GM12878 (cell line): ENCODE measurements at regions of chr6 and their contacts with region 1.

Region 1: DNA sequence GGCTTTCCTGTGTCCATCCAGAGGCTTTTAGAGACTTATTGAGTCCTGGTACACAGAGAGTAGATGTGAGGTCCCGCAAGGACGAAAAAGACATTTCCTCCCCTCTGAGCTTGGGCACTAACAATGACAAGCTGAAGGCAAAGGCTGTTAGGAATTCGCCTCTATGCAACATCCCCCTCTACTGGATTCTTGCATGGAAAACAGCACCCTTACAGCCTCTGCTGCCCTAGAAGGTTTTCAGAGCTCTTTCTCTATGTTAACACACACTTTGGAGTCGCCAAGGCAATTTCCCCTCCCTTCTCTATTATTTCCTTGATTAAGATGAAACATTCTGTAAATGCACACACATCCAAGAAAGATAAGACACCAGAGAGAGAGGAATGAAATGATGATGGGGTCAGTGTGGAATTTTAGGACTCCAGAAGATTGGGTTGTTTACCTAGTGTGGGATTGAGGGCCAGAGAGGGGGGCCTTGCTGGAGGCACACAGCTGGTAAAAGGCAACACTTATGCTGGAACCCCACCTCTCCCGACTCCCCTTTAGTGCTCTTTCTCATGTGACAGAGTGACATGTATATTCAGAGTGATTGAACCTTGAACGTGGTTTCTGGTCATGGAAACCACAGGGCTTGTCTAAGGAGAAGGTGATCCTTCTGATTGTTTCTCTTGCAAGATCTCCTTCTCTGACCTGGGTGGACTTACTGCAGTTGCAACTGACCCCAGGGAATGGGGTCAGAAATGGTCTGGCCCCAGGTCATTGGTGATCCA is 300.7 kb downstream of the CLIC5 start:
- DNase-seq: peak; percentile 48
- ATAC-seq: peak; percentile 54
- H3K4me3 ChIP-seq: no peak overlapping the region
- H3K27ac ChIP-seq: no peak overlapping the region
- H3K4me1 ChIP-seq: peaks cover 16% of the 10 kb centered on the region
- H3K27me3 ChIP-seq: no peaks in the 10 kb centered on the region
- CTCF ChIP-seq: peak; percentile 61 to 89 (median 75)
- EP300 ChIP-seq: no peak
- POLR2A ChIP-seq: no peak
- RAD21 ChIP-seq: peak; percentile 93

Region 2: DNA sequence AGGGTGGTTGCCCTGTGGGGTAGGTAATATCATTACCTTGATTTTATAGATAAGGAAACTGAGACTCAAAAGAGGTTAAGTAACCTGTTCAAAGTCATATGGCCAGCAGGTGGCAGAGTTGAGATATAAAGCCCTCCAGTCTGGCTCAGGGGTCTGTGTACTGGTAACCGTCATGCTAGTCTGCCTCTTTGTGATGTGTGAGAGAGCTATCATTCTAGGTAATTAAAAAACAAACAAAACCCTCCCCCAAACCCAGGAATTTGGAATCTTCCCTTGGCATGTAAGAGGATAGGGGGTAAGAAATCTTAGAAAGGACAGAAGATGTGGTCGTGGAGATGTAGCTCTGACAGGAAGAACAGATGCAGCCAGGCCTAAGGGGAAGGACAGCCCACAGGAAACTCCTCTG is 1121.4 kb before region 1 on chr6:
- CTCF ChIA-PET with region 1: interaction called, 15 read pairs
- POLR2A ChIA-PET with region 1: no interaction called
- RAD21 ChIA-PET with region 1: interaction called, 4 read pairs
- SMC1A ChIA-PET with region 1: interaction called, 6 read pairs
- in situ Hi-C with region 1: no loop called
- intact Hi-C with region 1: loop called (anchors 10 kb)
- DNase-seq: peak; percentile 7
- ATAC-seq: peak; percentile 93
- H3K4me3 ChIP-seq: no peak overlapping the region
- H3K27ac ChIP-seq: no peak overlapping the region
- H3K4me1 ChIP-seq: no peaks in the 10 kb centered on the region
- H3K27me3 ChIP-seq: peaks cover 0 to 2% of the 10 kb centered on the region in 2 experiments; a peak in 1 of 4 replicates
- CTCF ChIP-seq: peak; percentile 55 to 60 (median 56); a peak in 5 of 6 replicates
- EP300 ChIP-seq: no peak
- POLR2A ChIP-seq: no peak
- RAD21 ChIP-seq: peak; percentile 63

Region 3: DNA sequence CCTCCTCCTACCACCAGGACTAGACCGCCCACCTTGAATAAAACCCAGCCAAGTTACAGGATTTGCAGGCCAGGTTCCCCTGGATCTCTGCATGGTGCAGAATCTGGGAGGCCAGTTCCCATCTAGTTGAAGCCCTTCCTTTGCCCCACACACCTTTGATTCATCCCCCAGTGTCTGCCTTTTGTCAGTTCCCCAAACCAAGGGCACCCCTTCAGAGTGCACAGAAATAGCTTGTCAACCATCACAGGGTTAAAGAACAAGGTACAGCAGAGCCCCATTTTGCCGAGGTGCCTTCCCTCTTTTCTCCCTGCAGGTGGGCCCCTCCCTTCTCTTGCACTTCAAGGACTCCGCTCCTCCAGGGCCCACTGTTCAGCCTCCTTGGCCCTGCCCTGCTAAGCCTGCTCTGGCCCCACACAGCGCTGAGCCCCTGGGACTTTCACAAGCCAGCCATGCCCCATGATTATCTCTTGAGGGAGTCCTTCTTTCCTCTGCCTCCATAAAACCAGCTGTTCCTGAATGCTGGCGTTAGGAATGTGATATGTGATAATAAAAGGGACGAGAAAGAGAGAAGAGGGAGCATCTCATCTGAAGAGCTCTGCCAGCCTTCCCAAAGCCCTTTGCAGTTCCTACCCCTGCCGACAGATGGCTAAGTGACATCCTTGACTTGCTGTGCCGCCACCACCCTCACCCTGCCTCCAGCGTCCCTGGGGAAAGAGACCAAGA is 1047.1 kb before region 1 on chr6:
- CTCF ChIA-PET with region 1: interaction called, 13 read pairs
- POLR2A ChIA-PET with region 1: no interaction called
- RAD21 ChIA-PET with region 1: interaction called, 4 read pairs
- SMC1A ChIA-PET with region 1: interaction called, 3 read pairs
- in situ Hi-C with region 1: no loop called
- intact Hi-C with region 1: no loop called
- DNase-seq: no peak
- ATAC-seq: peak; percentile 89
- H3K4me3 ChIP-seq: no peak overlapping the region
- H3K27ac ChIP-seq: no peak overlapping the region
- H3K4me1 ChIP-seq: no peaks in the 10 kb centered on the region
- H3K27me3 ChIP-seq: no peaks in the 10 kb centered on the region; a peak in 1 of 4 replicates
- CTCF ChIP-seq: peak; percentile 67 to 89 (median 83)
- EP300 ChIP-seq: no peak
- POLR2A ChIP-seq: no peak
- RAD21 ChIP-seq: peak; percentile 65

Region 4: DNA sequence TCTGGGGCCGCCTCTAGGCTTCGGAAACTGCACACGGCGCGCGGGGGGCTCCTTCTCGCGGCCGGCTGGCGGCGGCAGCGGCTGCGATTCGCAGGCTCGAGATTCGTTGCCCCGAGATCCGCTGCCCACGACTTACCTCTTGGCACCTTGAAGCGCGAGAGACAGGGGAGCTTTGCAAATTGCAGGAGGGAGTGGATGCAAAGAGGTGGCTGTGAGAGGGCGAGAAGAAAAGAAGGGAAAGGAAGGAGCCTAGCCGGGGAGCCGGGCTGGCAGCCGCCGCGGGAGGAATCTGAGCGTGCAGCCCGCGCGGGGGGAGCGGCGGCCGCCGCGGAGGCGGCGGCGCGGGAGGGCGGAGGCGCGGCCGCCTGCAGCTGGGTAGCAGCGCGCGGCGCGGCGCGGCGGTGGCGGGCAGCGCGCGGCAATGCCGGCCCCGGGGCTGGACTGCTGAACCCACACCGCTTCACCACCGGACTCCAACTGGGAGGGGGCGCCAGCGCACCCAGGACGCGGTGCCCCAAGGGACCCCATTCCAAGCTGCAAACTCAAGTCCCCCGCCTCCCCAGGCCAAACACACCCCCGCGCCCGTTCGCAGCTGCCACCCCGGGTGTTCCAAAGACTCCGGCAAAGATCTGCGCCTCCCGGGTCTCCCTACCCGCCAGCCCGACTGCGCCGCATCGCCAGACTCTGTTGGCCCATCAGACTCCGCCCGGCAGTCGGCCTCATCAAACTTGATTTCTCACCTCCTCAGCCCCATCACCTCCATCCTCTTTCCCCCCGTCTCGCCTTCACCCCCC is 293.0 kb before region 1 on chr6:
- CTCF ChIA-PET with region 1: interaction called, 3 read pairs
- POLR2A ChIA-PET with region 1: no interaction called
- RAD21 ChIA-PET with region 1: interaction called, 4 read pairs
- SMC1A ChIA-PET with region 1: interaction called, 6 read pairs
- in situ Hi-C with region 1: no loop called
- intact Hi-C with region 1: loop called (anchors 1 kb)
- DNase-seq: no peak
- ATAC-seq: peak; percentile 49
- H3K4me3 ChIP-seq: peak overlapping the region; percentile 48; the same call in 1 of the 2 replicates
- H3K27ac ChIP-seq: no peak overlapping the region
- H3K4me1 ChIP-seq: no peaks in the 10 kb centered on the region; the same call in 1 of the 2 replicates
- H3K27me3 ChIP-seq: peaks cover 20 to 38% of the 10 kb centered on the region in 2 experiments
- CTCF ChIP-seq: peak in 2 of 3 experiments; percentile 10 to 15; a peak in 1 of 6 replicates
- EP300 ChIP-seq: no peak
- POLR2A ChIP-seq: no peak
- RAD21 ChIP-seq: no peak

Region 5: GRCh38 chr6:45677381-45678284 is 37.3 kb before region 1 on chr6:
- CTCF ChIA-PET with region 1: interaction called, 10 read pairs
- POLR2A ChIA-PET with region 1: interaction called, 4 read pairs
- RAD21 ChIA-PET with region 1: interaction called, 9 read pairs
- SMC1A ChIA-PET with region 1: interaction called, 11 read pairs
- in situ Hi-C with region 1: no loop called
- intact Hi-C with region 1: loop called (anchors 1 kb)
- DNase-seq: peak; percentile 30
- ATAC-seq: peak; percentile 79
- H3K4me3 ChIP-seq: peak overlapping the region; percentile 9; the same call in 1 of the 2 replicates
- H3K27ac ChIP-seq: no peak overlapping the region
- H3K4me1 ChIP-seq: peaks cover 19% of the 10 kb centered on the region
- H3K27me3 ChIP-seq: no peaks in the 10 kb centered on the region; a peak in 2 of 4 replicates
- CTCF ChIP-seq: no peak
- EP300 ChIP-seq: peak; percentile 25 to 40; a peak in 1 of 4 replicates
- POLR2A ChIP-seq: no peak
- RAD21 ChIP-seq: no peak

Region 6: GRCh38 chr6:45922728-45923351 is 207.9 kb after region 1 on chr6:
- CTCF ChIA-PET with region 1: interaction called, 27 read pairs
- POLR2A ChIA-PET with region 1: no interaction called
- RAD21 ChIA-PET with region 1: interaction called, 12 read pairs
- SMC1A ChIA-PET with region 1: interaction called, 29 read pairs
- in situ Hi-C with region 1: loop called (anchors 5 kb)
- intact Hi-C with region 1: loop called (anchors 1 kb)
- DNase-seq: no peak
- ATAC-seq: peak; percentile 77
- H3K4me3 ChIP-seq: no peak overlapping the region
- H3K27ac ChIP-seq: no peak overlapping the region
- H3K4me1 ChIP-seq: peaks cover 23% of the 10 kb centered on the region
- H3K27me3 ChIP-seq: no peaks in the 10 kb centered on the region; a peak in 1 of 4 replicates
- CTCF ChIP-seq: peak; percentile 63 to 81 (median 75)
- EP300 ChIP-seq: no peak
- POLR2A ChIP-seq: no peak
- RAD21 ChIP-seq: peak; percentile 88

Region 7: DNA sequence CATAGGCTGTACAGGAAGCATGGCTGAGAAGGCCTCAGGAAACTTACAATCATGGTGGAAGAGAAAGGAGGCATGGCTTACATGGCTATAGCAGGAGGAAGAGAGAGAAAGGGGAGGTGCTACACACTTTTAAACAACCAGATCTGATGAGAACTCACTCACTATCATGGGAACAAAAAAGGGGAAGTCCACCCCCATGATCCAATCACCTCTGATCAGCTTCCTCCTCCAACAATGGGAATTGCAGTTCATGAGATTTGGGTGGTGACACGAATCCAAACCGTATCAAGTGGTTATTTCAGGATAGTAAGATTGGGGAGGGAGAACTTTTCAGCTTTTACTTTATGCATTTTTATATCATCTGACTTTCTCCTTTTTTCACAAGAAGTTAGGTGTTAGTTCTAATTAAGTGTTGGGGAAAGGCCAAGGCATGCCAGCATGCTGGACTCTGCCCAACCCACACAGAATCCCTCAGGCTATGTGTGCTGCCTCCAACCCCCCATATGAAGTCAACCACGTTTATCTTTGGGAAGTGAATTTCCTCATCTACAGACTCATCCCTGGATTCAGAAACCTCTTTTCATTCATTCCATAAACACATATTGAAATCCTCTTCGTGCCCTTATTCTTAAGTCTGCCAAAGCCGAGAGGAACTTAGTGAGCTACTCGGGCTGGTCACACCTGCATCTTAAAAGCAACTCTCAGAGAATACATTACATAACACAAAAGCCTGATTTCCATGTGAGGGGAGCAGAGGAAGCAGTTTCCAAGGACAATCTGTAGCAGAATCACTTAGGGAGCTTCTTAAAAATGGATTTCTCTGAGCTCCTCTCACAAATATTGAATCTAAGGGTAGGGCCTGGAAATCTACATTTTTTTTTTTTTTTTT is 317.4 kb after region 1 on chr6:
- CTCF ChIA-PET with region 1: no interaction called
- POLR2A ChIA-PET with region 1: no interaction called
- RAD21 ChIA-PET with region 1: no interaction called
- SMC1A ChIA-PET with region 1: no interaction called
- in situ Hi-C with region 1: no loop called
- intact Hi-C with region 1: no loop called
- DNase-seq: no peak
- ATAC-seq: no peak
- H3K4me3 ChIP-seq: no peak overlapping the region
- H3K27ac ChIP-seq: no peak overlapping the region
- H3K4me1 ChIP-seq: no peaks in the 10 kb centered on the region
- H3K27me3 ChIP-seq: no peaks in the 10 kb centered on the region; a peak in 2 of 4 replicates
- CTCF ChIP-seq: no peak
- EP300 ChIP-seq: no peak
- POLR2A ChIP-seq: no peak
- RAD21 ChIP-seq: no peak